Endothelial cell of umbilical vein (primary cell): ENCODE measurements at regions of chr11 and their contacts with region 1.

Region 1: GRCh38 chr11:59918987-59919589 is 19.1 kb upstream of the OOSP1 start:
- DNase-seq: peak; percentile 72
- H3K4me3 ChIP-seq: no peak overlapping the region
- H3K27ac ChIP-seq: no peak overlapping the region
- H3K4me1 ChIP-seq: no peaks in the 10 kb centered on the region
- H3K27me3 ChIP-seq: no peaks in the 10 kb centered on the region
- CTCF ChIP-seq: peak; percentile 38 to 39
- POLR2A ChIP-seq: no peak

Region 2: GRCh38 chr11:59802639-59803176 is 116.4 kb before region 1 on chr11:
- CTCF ChIA-PET with region 1: interaction called, 32 read pairs
- POLR2A ChIA-PET with region 1: no interaction called
- dilution Hi-C with region 1: no loop called
- intact Hi-C with region 1: no loop called
- DNase-seq: peak; percentile 79
- H3K4me3 ChIP-seq: no peak overlapping the region
- H3K27ac ChIP-seq: peak overlapping the region; percentile 83
- H3K4me1 ChIP-seq: peaks cover 9% of the 10 kb centered on the region
- H3K27me3 ChIP-seq: no peaks in the 10 kb centered on the region
- CTCF ChIP-seq: peak; percentile 34 to 47
- POLR2A ChIP-seq: no peak

Region 3: DNA sequence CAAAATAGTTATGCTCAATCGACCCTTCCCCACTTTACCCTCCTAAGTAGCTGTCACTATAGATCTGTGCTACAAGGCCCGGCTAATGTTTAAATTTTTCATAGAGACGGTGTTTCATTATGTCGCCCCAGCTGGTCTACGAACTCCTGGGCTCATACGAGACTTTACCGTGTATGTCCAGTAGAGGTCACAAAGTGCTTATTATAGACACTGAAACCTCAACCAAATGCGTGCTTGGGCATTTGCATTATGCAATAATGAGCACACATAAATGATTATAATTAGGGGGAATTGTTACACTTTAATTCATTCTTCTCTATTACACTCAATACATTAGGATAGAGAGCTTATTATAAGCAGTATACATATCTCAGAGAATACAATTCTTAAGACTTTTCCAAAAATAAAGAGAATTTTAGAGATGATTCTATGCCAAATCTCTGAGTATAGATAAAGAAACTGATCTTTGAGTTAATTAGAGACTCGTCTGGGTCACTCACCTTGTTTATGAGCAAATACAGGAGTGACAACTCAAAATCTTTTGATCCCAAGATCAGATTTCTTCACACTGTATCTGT is 96.0 kb before region 1 on chr11:
- CTCF ChIA-PET with region 1: interaction called, 76 read pairs
- POLR2A ChIA-PET with region 1: no interaction called
- dilution Hi-C with region 1: no loop called
- intact Hi-C with region 1: loop called (anchors 1 kb)
- DNase-seq: peak; percentile 87
- H3K4me3 ChIP-seq: no peak overlapping the region
- H3K27ac ChIP-seq: no peak overlapping the region
- H3K4me1 ChIP-seq: no peaks in the 10 kb centered on the region
- H3K27me3 ChIP-seq: no peaks in the 10 kb centered on the region
- CTCF ChIP-seq: peak; percentile 48 to 67
- POLR2A ChIP-seq: no peak

Region 4: DNA sequence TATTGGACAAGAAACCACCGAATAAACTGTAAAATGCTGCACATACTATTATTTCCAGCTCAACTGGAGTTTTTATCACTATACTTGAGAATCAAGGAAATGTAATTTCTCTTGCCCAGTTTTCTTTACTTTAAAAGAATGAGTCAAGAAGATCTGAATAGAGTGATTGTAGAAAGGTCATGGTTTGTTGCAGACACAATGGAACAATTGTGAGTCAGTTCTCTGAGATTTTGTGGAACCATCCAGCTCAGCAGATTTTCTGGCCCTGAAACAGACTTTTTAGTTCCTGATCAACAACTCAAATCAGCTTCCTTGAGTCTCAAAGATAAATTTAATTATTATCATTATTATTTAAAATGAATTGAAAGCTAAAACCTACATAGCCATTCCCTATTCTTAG is 54.1 kb before region 1 on chr11:
- CTCF ChIA-PET with region 1: interaction called, 17 read pairs
- POLR2A ChIA-PET with region 1: no interaction called
- dilution Hi-C with region 1: no loop called
- intact Hi-C with region 1: no loop called
- DNase-seq: peak; percentile 95
- H3K4me3 ChIP-seq: no peak overlapping the region
- H3K27ac ChIP-seq: peak overlapping the region; percentile 44
- H3K4me1 ChIP-seq: peaks cover 15% of the 10 kb centered on the region
- H3K27me3 ChIP-seq: no peaks in the 10 kb centered on the region
- CTCF ChIP-seq: no peak
- POLR2A ChIP-seq: no peak

Region 5: GRCh38 chr11:59877784-59878183 is 41.3 kb before region 1 on chr11:
- CTCF ChIA-PET with region 1: no interaction called
- POLR2A ChIA-PET with region 1: no interaction called
- dilution Hi-C with region 1: no loop called
- intact Hi-C with region 1: no loop called
- DNase-seq: no peak
- H3K4me3 ChIP-seq: no peak overlapping the region
- H3K27ac ChIP-seq: no peak overlapping the region
- H3K4me1 ChIP-seq: no peaks in the 10 kb centered on the region
- H3K27me3 ChIP-seq: no peaks in the 10 kb centered on the region
- CTCF ChIP-seq: no peak
- POLR2A ChIP-seq: no peak

Region 6: DNA sequence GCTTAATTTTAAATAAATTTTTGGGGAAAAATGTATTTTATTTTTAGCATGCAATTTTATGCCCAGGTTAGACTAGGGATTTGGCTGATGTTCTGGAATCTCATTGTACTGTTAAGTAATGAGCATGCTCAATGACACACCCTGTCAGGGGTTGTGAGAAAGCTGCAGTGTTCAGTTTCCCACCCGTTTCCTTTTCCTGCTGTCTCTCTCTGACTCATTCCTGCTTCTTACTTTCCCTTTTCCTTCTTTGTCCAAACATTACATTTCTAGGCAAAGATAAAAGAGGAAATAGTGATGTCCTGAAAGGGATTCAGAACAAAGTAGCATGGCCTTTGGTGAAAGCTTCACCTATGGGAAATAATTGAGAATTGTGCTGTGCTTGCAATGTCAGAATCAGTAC is 17.8 kb before region 1 on chr11:
- CTCF ChIA-PET with region 1: interaction called, 19 read pairs
- POLR2A ChIA-PET with region 1: no interaction called
- dilution Hi-C with region 1: no loop called
- intact Hi-C with region 1: loop called (anchors 1 kb)
- DNase-seq: peak; percentile 98
- H3K4me3 ChIP-seq: peak overlapping the region in 1 of 3 experiments; percentile 38
- H3K27ac ChIP-seq: peak overlapping the region; percentile 95
- H3K4me1 ChIP-seq: peaks cover 15% of the 10 kb centered on the region
- H3K27me3 ChIP-seq: no peaks in the 10 kb centered on the region
- CTCF ChIP-seq: no peak
- POLR2A ChIP-seq: no peak

Region 7: DNA sequence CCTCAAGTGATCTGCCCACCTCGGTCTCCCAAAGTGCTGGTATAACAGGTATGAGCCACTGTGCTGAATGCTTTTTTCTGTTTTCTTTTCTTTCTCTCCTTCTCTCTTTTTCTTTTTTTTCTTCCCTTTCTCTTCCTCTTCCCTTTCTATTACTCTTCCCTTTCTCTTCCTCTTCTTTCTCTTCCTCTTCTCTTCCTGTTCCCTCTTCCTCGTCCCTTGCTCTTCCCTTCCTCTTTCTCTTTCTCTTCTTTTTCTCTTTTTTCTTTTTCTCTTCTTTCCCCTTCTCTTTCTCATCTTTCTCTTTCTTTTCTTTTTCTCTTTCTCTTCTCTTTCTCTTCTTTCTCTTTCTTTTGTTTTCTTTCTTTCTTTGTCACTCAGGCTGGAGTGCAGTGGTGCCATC is 20.4 kb after region 1 on chr11:
- CTCF ChIA-PET with region 1: interaction called, 12 read pairs
- POLR2A ChIA-PET with region 1: no interaction called
- dilution Hi-C with region 1: no loop called
- intact Hi-C with region 1: no loop called
- DNase-seq: no peak
- H3K4me3 ChIP-seq: no peak overlapping the region
- H3K27ac ChIP-seq: no peak overlapping the region
- H3K4me1 ChIP-seq: no peaks in the 10 kb centered on the region
- H3K27me3 ChIP-seq: peaks cover 3 to 4% of the 10 kb centered on the region in 2 experiments
- CTCF ChIP-seq: no peak
- POLR2A ChIP-seq: no peak

Region 8: DNA sequence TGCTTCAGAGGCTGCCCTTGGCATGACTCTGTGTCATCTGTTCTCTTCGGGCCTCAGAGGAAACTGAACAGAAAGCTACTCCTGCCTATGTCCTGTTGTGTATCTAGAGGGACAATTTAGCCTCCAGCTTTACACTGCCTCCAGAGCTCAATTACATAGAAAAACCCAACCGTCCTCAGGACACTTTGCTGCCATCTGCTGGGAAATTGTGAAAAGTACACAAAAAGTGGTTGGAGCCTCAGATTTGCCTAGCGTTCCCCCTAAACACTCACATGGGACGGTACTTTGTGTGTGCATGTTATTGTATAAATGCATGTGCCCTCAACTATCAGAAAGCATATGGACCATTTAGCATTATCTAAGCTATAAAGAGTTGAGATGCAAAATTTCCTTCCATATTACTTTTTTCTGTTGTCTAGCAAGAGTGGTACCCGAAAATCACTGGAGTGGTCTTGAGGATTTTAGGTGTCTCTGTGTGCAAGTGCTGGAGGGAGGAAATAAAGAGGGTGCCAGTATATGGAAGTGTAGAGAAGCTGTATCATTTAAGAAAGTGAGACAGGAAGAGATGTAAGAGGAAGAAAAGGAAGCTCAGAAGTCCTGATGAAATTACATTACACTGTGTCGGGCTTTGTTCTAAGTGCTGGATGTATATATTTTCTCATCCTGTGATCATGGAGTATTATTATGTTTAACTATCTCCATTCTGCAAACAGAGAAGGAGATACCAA is 332.6 kb after region 1 on chr11:
- CTCF ChIA-PET with region 1: interaction called, 34 read pairs
- POLR2A ChIA-PET with region 1: no interaction called
- dilution Hi-C with region 1: no loop called
- intact Hi-C with region 1: loop called (anchors 5 kb)
- DNase-seq: peak; percentile 89
- H3K4me3 ChIP-seq: no peak overlapping the region
- H3K27ac ChIP-seq: no peak overlapping the region
- H3K4me1 ChIP-seq: peaks cover 22% of the 10 kb centered on the region
- H3K27me3 ChIP-seq: peaks cover 0 to 3% of the 10 kb centered on the region in 2 experiments
- CTCF ChIP-seq: peak; percentile 43 to 58
- POLR2A ChIP-seq: no peak